Right ventricle myocardium superior (tissue), 1 donor: ENCODE measurements at regions of chr1 and their contacts with region 1.

Region 1: DNA sequence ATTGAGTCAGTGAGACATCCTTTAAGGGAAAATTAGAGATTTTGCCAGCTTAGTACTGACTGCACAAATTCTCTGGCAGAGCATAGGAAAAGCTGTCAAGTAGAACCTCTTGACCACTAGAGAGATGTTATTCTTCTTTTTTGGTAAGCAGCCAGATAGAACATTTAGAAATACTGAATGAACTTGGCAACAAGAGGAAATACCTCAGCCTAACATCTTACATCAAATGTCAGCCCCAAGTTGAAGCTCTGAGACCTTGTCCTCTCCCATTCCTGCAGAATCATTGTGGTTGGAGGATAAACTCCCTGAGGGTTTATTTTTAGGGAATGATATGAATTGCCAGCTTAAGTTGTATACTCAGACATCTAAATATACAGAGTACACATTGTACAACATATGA is 53.5 kb downstream of the MIGA1 start:
- DNase-seq: no peak
- ATAC-seq: peak; percentile 85

Region 2: GRCh38 chr1:77421504-77422233 is 411.2 kb before region 1 on chr1:
- intact Hi-C with region 1: no loop called
- DNase-seq: no peak
- ATAC-seq: no peak

Region 3: GRCh38 chr1:77857552-77857951 is 24.7 kb after region 1 on chr1:
- intact Hi-C with region 1: no loop called
- DNase-seq: no peak
- ATAC-seq: no peak

Region 4: GRCh38 chr1:77889673-77890070 is 56.8 kb after region 1 on chr1:
- intact Hi-C with region 1: loop called (anchors 5 kb)
- DNase-seq: no peak
- ATAC-seq: peak; percentile 15